Left colon (tissue), 2 donors: ENCODE measurements at regions of chr11 and their contacts with region 1.

Region 1: DNA sequence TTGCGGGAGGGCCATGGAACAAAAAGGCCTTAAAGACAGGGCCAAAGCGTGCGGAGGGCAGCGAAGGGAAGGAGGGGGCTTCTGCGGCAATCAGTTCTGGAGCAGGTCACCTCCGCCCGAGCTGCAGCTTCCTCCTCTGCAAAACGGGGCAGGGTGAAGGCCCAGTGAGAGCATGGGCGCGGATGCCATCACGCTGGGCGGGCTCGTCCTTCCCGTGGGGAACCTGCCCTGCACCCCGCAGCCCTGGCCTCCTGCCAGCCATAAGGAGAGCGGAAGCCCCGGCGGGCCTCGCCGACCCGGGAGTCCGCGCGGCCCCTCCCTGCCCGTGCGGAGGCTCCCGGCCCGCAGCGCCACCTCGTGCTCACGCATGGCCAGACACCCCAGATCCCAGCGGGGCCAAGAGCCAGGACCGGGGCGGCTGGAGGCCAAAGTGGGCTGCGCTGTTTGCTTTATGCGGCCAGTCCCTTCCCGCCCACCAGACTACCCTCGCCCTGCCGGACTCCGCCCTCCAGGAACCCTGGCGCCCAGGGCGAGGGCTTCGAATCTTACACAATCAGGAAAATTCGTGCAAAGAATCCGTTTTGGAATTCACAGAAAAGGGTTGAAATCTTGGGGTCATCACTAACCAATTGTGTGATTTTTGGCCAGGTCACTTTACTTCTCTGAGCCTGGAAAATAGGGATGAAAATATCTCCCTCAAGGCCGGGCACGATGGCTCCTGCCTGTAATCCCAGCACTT is 16.1 kb downstream of the TSKU start:
- DNase-seq: peak; percentile 78 to 92
- ATAC-seq: peak; percentile 76

Region 2: DNA sequence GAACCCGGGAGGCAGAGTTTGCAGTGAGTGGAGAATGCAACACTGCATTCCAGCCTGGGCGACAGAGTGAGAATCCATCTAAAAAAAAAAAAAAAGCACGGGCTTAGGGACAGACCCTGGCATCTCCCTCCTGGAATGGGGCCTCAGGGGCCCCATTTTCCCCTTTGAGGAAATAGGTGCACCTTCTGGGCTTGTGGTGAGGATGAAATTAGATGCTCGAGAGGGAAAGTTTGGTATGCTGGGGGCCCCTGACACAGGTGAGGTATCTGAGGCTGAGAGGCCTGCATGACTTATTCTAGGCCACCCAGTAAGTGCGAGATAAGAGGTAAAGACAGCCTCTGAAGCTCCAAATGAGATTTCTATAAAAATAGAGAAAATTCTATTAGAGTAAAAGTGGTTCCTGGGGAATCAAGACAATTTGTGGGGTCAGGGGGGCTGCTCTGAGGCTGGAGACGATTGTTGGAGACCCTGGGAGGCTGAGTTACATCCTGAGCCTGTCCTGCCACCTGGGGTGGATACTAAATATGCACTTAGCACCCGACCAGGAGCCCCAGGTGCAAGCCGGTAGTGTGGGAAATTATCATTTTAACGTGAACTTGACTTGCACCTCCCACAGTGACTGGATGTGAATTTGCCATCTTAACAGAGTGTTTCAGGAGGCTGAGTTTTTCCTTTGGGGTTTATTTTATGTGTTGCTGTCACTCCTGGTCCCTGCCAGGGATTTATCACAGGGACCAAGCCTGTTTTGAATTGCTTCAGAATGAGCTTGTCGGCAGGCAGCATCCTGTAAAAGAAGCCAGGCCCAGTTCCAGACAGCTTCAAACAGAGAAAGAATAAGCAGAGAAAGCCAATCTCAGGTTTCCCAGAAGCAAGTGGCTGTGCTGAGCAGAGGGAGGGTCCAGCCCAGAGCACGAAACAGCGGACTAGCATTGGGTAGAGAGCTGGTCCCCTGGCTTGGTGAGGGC is 64.5 kb before region 1 on chr11:
- intact Hi-C with region 1: loop called (anchors 2 to 5 kb)
- DNase-seq: no peak
- ATAC-seq: no peak

Region 3: GRCh38 chr11:76860539-76861475 is 61.6 kb after region 1 on chr11 and contains the start of gene ACER3:
- intact Hi-C with region 1: no loop called
- DNase-seq: peak; percentile 90 to 95
- ATAC-seq: peak; percentile 96
- total RNA-seq, gene ACER3: 38.9 to 55.5 TPM